ENCODE measurements at regions of chr17 and their contacts with region 1.

Region 1: DNA sequence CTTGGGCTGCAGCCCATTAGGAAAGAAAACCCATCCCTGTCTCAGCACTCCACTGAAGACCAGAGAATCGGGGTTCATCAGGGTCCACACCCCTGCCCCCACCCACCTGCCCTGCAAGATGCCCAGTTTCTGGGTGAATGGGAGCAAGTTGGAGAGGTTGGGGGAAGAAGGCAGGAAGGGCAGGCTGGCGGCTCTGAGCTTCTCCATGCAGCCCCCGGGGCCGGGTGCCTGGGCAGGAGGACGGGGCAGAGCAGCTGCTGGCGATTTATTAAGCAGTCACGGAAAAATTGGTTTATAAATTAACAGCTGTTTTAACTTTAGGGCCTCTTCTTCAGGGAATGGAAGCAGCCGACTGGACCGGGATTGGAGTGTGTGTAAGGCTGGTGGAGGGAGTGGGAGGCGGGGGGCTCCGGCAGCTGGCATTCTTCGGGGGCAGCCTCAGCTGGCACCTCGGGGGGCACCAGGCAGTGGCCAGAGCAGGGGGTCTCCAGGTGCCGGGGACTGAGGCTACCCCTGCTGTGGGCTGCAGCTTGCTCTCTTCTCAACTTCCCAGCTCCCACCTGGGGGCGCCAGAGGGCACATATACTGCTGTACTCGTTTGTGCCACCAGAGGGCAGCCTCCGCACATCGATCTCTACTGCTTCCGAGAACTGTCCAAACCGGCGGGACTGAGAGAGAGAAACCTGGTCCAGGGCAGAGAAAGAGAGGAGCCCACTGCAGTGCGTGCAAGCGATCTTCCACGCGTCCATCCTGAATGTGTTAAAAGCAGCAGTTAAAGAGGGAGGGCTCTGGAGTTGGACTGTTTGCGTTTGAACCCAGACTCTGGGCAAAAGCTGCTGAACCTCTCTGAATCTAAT is 5.0 kb upstream of the PPP1R1B start:
- DNase-seq: peak; percentile 90
- CTCF ChIP-seq: peak; percentile 100

Region 2: GRCh38 chr17:39547713-39548478 is 73.9 kb before region 1 on chr17:
- CTCF ChIA-PET with region 1: interaction called, 123 read pairs
- POLR2A ChIA-PET with region 1: no interaction called
- DNase-seq: peak; percentile 79
- CTCF ChIP-seq: peak; percentile 94

Region 3: GRCh38 chr17:39598047-39598481 is 23.7 kb before region 1 on chr17:
- CTCF ChIA-PET with region 1: interaction called, 50 read pairs
- POLR2A ChIA-PET with region 1: no interaction called
- DNase-seq: no peak
- CTCF ChIP-seq: no peak

Region 4: DNA sequence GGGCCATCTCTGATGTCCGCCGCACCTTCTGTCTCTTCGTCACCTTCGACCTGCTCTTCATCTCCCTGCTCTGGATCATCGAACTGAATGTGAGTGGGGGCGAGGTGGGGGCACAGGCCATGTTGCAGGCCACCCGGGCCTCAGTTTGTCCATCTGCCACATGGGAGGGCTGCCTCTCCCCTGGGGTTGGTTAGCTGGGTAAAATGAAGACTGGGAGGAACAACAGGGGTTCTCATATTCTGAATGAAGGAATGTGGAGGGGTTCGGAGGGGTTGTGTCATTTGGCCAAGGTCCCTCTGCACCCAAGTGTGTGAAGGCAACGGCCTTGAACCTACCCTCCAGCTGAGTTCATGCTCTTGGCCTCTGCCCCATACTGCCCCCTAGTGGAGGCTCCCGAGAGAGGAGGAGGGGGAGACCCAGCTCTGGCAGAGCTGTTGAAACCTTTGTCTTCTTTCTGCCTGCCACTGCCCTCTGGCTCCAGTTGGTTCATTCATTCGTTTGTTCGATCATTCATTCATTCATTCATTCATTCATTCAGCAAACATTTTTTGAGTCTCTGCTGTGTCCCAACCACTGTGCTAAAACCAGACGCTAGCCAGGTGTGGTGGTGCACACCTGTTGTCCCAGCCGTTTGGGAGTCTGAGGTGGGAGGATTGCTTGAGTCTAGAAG is 32.0 kb after region 1 on chr17:
- CTCF ChIA-PET with region 1: interaction called, 134 read pairs
- POLR2A ChIA-PET with region 1: no interaction called
- DNase-seq: peak; percentile 91
- CTCF ChIP-seq: peak; percentile 77

Region 5: DNA sequence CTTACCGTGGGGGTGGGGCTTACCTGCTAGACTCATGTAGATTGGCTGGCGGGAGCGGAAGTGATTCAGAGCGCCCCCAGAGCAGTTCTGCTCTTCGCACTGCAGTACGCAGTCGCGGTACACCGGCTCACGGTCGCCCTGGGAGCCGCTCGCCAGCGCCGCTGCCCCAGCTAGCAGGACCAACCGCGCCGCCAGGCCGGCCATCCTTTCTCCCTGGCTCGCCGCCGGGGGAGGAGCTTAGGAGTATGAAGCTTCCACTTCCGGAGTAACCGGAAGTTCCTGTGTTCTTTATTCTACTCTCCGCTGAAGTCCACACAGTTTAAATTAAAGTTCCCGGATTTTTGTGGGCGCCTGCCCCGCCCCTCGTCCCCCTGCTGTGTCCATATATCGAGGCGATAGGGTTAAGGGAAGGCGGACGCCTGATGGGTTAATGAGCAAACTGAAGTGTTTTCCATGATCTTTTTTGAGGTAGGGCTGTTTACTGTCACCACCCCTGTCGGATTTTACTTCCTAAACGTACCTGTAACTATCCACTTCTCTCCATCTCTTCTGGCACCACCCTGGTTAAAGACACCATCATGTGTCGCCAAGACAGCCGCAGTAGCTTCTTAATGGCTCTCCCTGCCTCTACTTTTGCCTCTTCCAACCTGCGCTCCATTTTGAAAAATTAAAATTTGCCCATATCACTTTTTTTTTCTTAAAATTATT is 66.2 kb after region 1 on chr17 and contains the start of gene PGAP3:
- CTCF ChIA-PET with region 1: interaction called, 15 read pairs
- POLR2A ChIA-PET with region 1: no interaction called
- DNase-seq: peak; percentile 94
- CTCF ChIP-seq: no peak

Region 6: DNA sequence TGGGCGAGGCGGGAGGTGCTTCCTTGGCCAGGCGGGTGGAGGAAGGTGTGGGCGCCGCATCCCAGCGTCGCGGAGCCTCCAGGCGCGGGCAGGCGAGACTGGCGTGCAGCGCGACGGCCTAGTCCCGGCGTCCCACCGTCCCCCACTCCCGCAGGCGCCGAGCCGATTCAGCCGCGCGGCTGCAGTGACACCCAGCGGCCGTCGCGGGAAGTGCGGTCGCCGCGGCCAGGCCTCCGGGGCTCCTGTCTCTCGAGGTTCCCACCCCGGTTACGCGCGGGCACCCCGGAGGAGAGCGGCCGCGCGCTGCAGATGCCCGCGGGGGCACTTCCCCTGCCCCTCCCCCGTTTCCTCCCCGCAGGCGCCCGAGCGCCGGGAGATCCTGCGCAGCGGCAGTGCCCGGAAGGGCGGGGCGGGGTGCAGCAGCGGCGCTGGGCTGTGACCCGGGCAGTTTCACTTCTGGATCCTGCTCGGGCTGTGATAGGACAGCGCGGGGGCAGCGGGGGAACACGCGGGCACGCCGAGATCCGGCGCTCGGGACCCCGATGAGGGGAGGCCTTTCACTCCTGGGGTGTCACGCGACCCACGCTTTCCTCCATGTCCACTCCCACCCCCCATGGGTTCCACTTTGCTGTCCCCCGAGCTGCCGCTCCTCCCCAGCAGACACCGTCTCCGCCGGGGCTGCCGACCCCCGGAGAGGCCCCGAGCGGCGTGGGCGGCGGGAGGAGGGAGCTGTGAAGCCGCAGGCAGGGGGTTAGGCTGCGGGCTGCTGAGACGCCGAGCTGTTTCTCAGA is 132.6 kb after region 1 on chr17:
- CTCF ChIA-PET with region 1: interaction called, 93 read pairs
- POLR2A ChIA-PET with region 1: no interaction called
- DNase-seq: peak; percentile 96
- CTCF ChIP-seq: peak; percentile 87

Region 7: DNA sequence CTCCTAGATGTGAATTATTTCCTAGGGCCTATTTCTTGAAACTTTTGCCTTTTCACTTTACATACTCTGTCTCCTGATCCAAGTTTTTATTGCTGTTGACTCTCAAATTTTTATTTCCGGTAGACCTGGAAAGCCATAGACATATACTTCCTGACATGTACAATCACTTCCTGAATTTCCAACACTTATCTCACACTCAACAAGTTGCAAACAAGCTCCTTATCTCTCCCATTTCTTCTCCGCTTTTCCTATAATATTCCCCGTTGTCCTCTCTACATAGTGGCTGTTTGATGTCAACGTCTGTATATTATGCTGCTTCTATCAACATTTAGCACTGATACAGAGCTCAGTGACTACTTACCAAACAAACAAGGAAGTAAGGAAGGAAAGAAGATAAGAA is 183.1 kb after region 1 on chr17:
- CTCF ChIA-PET with region 1: no interaction called
- POLR2A ChIA-PET with region 1: no interaction called
- DNase-seq: no peak
- CTCF ChIP-seq: no peak